ENCODE measurements at regions of chr3 and their contacts with region 1.

Region 1: GRCh38 chr3:153026026-153026425 is 136.0 kb upstream of the RAP2B start:
- DNase-seq: peak; percentile 23
- ATAC-seq: no peak
- H3K4me3 ChIP-seq: no peak overlapping the region
- H3K27ac ChIP-seq: no peak overlapping the region
- H3K4me1 ChIP-seq: no peaks in the 10 kb centered on the region
- H3K27me3 ChIP-seq: peaks cover 0 to 6% of the 10 kb centered on the region in 2 experiments; a peak in 2 of 5 replicates
- CTCF ChIP-seq: peak; percentile 51
- EP300 ChIP-seq: no peak
- POLR2A ChIP-seq: no peak
- RAD21 ChIP-seq: no peak

Region 2: DNA sequence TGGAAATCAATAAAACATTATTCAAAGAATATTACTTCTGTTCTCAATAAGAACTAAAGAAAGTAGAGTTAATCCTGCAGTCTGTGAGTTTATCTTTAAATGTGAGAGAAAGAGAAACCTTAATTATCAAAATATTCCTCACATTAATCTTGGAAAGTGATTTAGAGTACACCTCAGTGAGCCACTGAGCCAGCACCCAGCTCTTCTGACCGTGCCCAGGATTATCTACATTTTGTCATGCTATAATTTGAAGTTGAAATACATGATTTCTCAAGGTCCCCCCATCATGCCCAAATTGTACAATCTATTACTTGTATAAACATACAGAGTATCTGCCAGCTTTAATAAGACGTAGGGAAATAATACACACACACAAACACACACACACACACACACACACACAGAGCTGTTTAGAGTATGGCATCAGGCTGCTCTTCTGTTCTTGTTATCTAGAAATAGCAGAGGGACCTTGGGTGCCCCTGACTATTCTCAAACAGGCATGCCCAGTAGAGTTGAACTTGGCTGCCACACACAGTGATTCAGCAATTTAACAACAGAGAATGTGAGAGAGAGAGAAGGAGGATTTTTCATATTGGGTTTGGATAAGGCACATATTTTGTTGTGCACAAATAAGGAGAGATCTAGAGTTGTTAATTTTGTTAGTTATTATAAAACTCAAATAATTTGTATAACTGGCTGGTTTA is 116.7 kb before region 1 on chr3:
- CTCF ChIA-PET with region 1: no interaction called
- POLR2A ChIA-PET with region 1: no interaction called
- in situ Hi-C with region 1: no loop called
- intact Hi-C with region 1: no loop called
- DNase-seq: no peak
- ATAC-seq: no peak
- H3K4me3 ChIP-seq: no peak overlapping the region
- H3K27ac ChIP-seq: no peak overlapping the region
- H3K4me1 ChIP-seq: no peaks in the 10 kb centered on the region
- H3K27me3 ChIP-seq: no peaks in the 10 kb centered on the region
- CTCF ChIP-seq: no peak
- EP300 ChIP-seq: no peak
- POLR2A ChIP-seq: no peak
- RAD21 ChIP-seq: no peak

Region 3: DNA sequence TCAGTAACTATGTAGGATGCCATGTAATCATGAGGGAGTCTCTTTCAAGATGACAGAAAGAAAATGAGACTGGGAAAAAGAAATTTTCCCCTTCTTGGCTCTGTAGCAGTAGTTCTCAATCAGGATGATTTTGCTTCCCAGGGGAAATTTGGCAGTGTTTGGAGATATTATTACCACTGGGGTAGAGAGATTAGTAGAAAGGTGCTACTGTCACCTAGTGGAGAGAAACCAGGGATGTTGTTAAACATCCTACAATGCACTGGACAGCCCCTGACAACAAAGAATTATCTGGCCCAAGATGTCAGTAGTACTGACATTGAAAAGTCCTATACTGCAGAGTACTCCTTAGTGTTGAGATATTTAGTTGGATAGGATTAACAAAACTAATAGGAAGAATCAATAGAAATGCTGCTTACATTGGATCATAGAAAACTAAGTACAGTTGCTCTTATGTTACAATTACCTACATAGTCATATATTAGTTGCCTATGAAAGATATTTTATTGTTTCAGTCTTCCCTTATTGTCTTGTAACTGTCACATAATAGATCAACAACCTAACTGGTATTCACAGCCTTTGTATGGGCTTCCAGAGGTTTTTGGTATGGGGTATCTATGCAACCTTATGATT is 569.3 kb after region 1 on chr3:
- CTCF ChIA-PET with region 1: no interaction called
- POLR2A ChIA-PET with region 1: no interaction called
- in situ Hi-C with region 1: loop called (anchors 10 kb)
- intact Hi-C with region 1: loop called (anchors 1 kb)
- DNase-seq: peak; percentile 18
- ATAC-seq: peak; percentile 77
- H3K4me3 ChIP-seq: no peak overlapping the region
- H3K27ac ChIP-seq: no peak overlapping the region
- H3K4me1 ChIP-seq: peaks cover 16% of the 10 kb centered on the region
- H3K27me3 ChIP-seq: no peaks in the 10 kb centered on the region
- CTCF ChIP-seq: peak; percentile 65
- EP300 ChIP-seq: no peak
- POLR2A ChIP-seq: no peak
- RAD21 ChIP-seq: peak; percentile 33; the same call in 1 of the 2 replicates

Region 4: DNA sequence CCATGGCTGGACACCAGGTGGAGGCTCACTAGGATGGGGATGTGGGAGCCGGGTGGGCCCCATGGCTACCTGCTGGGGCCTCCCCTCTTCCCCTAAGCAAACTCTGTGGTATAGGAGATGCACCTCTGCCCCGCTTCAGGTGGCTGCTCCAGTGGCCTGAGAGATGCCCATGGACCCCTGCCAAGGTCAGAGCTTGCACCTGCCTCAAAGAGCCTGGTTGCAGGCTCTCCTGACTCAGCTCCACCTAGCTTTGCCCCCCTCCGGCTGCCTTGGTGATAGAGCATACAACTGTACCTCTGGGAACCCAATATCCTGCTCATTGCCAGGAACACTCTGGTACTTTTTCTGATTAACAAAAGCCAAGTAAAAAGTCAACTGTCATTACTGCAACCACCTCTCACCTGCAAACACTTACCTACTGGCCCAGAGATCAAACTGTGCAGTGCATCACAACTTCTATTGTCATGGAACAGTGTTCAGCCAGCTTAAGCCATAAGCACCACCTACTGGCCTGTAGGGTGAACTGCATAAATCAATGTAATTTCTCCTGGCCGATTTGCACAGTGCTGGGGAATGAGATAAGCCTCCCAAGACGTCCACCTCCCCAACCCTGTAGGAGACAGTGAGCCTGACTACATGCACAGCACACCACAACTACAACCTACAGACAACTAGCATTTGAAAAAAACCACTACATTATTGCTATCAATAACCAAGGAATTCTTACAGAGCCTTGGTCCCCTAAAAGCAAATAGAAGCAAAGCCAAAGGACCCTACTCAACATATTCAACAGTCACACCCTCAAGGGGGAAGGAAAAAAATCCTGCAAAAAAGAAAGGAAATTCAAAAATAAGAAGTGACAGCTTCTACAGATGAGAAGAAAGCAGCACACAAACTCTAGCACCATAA is 742.8 kb after region 1 on chr3:
- CTCF ChIA-PET with region 1: interaction called, 9 read pairs
- POLR2A ChIA-PET with region 1: no interaction called
- in situ Hi-C with region 1: no loop called
- intact Hi-C with region 1: loop called (anchors 1 kb)
- DNase-seq: peak; percentile 30
- ATAC-seq: peak; percentile 98
- H3K4me3 ChIP-seq: no peak overlapping the region
- H3K27ac ChIP-seq: no peak overlapping the region
- H3K4me1 ChIP-seq: no peaks in the 10 kb centered on the region
- H3K27me3 ChIP-seq: no peaks in the 10 kb centered on the region
- CTCF ChIP-seq: peak; percentile 83
- EP300 ChIP-seq: no peak
- POLR2A ChIP-seq: no peak
- RAD21 ChIP-seq: peak; percentile 48